Calu3 (cell line): ENCODE measurements at regions of chr19 and their contacts with region 1.

Region 1: GRCh38 chr19:34974646-34975045 is 10.6 kb upstream of the ZNF792 start:
- DNase-seq: no peak
- H3K4me3 Mint-ChIP-seq: no peak overlapping the region
- H3K27ac Mint-ChIP-seq: no peak overlapping the region
- H3K4me1 Mint-ChIP-seq: peaks cover 25% of the 10 kb centered on the region
- H3K27me3 Mint-ChIP-seq: peaks cover 11% of the 10 kb centered on the region
- CTCF ChIP-seq: no peak

Region 2: DNA sequence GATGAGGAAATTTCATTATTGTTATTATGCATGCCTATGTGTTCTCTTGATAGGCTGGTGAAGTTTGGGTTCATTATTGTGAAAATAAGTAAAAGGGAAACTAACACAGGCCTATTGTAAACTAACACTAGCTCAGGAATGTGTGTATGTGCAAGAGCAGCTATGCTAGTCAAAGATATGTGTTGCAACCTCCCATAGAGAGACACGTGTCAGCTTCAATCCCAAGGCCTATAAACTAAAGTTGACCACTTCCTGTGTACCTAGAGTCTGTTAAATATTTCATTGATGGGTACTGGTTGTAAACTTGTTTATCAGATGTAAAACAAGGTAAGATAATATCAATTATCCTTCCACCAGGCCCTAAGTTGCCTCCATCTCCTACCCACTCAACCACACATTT is 92.7 kb before region 1 on chr19:
- CTCF ChIA-PET with region 1: no interaction called
- intact Hi-C with region 1: no loop called
- DNase-seq: no peak
- H3K4me3 Mint-ChIP-seq: no peak overlapping the region
- H3K27ac Mint-ChIP-seq: no peak overlapping the region
- H3K4me1 Mint-ChIP-seq: no peaks in the 10 kb centered on the region
- H3K27me3 Mint-ChIP-seq: peaks cover 29% of the 10 kb centered on the region
- CTCF ChIP-seq: no peak

Region 3: GRCh38 chr19:35006342-35007018 is 31.8 kb after region 1 on chr19:
- CTCF ChIA-PET with region 1: interaction called, 22 read pairs
- intact Hi-C with region 1: no loop called
- DNase-seq: peak; percentile 91
- H3K4me3 Mint-ChIP-seq: peak overlapping the region; percentile 46
- H3K27ac Mint-ChIP-seq: peak overlapping the region; percentile 90
- H3K4me1 Mint-ChIP-seq: peaks cover 59% of the 10 kb centered on the region
- H3K27me3 Mint-ChIP-seq: no peaks in the 10 kb centered on the region
- CTCF ChIP-seq: no peak

Region 4: DNA sequence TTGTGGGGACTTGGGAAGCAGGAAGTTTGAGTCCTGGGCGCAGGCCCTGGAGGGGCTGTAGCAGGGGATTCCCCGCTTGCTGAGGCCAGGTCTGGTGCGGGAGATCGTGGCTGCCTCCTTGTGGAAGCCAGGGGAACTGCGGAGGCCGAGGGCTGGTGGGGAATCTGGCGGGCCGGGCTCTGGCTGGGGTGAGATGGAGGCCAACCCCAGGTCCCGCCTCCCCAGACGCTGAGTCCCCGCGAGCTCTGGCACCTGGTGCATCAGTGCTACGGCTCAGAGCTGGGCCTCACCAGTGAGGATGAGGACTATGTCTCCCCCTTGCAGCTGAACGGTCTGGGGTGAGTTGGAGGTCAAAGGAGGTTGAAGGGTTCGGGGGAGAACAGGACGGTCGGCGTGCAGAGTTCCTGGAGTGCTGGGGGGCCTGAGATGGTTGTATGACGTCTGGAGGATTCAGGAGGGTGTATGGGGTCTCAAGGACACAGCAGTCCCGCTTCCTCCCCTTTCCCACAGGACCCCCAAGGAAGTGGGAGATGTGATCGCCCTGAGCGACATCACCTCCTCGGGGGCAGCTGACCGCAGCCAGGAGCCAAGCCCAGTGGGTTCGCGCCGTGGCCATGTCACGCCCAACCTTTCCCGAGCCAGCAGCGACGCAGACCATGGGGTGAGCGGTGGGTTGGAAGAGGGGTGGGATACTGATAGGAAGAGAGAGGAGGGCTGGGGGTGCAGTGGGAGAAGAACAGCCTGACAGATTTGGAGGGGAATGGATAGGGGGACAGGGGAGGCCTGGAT is 38.6 kb after region 1 on chr19:
- CTCF ChIA-PET with region 1: interaction called, 4 read pairs
- intact Hi-C with region 1: loop called (anchors 1 kb)
- DNase-seq: peak; percentile 86
- H3K4me3 Mint-ChIP-seq: peak overlapping the region; percentile 26
- H3K27ac Mint-ChIP-seq: peak overlapping the region; percentile 45
- H3K4me1 Mint-ChIP-seq: peaks cover 14% of the 10 kb centered on the region
- H3K27me3 Mint-ChIP-seq: no peaks in the 10 kb centered on the region
- CTCF ChIP-seq: peak; percentile 98

Region 5: DNA sequence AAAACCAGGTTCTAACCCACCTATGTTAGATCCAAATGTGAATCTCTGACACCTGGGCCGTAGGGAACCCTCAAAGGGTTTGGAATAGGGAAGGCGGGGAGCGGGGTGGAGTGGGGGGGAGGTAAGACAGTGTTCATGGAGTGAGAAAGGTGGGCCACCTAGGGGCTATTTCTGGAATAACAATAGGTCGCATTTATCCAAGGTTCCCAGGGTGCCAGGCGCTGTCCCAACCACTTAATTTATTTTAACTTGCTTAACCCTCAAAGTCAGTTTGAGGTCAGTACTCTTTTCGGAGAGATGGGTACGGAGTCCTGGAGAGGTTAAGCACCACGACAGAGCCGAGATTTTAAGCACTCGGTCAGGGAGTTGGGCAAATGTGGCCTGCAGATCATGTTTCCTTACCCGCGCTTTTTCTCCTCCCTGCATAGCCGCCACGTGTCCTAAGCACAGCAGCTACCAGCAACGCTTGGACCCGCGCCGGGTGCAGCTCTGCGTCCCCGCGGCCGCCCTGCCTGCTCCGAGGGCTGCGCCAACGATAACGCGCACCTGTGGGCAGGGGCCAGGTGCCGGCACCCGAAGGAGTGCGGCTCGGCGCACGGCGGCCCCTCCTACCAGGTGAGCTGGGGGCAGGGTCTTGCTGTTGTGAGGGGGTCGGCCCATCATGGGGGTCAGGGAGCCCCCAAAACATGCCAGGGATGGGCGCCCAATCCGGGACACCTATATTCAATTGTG is 116.0 kb after region 1 on chr19:
- CTCF ChIA-PET with region 1: no interaction called
- intact Hi-C with region 1: loop called (anchors 1 kb)
- DNase-seq: peak; percentile 83
- H3K4me3 Mint-ChIP-seq: peak overlapping the region; percentile 46
- H3K27ac Mint-ChIP-seq: peak overlapping the region; percentile 48
- H3K4me1 Mint-ChIP-seq: peaks cover 49% of the 10 kb centered on the region
- H3K27me3 Mint-ChIP-seq: no peaks in the 10 kb centered on the region
- CTCF ChIP-seq: peak; percentile 89